ENCODE measurements at regions of chr20 and their contacts with region 1.

Region 1: GRCh38 chr20:52494244-52494643 is 302.7 kb upstream of the ZFP64 start:
- DNase-seq: peak; percentile 94
- H3K4me3 ChIP-seq: peak overlapping the region in 1 of 3 experiments; percentile 66
- H3K27ac ChIP-seq: peak overlapping the region; percentile 100
- H3K4me1 ChIP-seq: peaks cover 47% of the 10 kb centered on the region
- H3K27me3 ChIP-seq: no peaks in the 10 kb centered on the region
- CTCF ChIP-seq: no peak
- POLR2A ChIP-seq: peak; percentile 37

Region 2: DNA sequence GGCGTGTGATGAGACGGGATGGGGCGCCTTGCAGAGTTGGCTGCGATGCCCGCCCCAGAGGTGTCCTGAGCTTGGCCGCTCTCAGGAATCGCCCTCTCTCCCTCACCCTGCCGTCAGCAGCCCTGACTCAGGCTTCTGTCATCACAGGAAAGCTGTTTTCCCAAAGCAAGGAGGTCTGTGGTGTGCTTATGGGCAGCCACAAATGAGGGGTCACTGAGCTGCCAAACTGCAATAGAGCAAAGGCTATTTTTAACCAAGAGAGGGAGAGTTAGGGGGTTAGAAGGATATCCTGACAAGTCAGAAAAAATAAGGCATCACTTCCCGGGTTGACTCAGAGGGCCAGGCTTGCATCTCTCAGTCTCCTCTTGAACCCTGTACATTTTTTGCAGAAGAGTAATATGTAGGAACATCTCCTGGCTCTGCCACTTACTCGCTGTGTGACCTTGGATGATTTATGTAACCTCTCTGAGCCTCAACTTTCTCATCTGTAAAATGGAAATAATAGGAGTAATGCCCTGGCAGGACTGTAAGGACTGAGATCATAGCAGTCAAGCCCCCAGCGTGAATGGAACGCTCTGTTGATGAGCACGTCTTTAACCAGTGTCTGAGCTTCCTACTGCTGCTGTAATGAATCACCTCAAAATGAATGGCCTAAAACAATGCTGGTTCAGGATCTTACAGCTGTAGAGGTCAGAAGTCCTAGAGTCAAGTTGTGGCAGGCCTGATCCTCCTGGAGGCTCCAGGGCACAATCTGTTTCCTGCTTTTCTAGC is 1133.6 kb before region 1 on chr20:
- CTCF ChIA-PET with region 1: no interaction called
- POLR2A ChIA-PET with region 1: no interaction called
- dilution Hi-C with region 1: no loop called
- intact Hi-C with region 1: loop called (anchors 2 kb)
- DNase-seq: peak; percentile 98
- H3K4me3 ChIP-seq: no peak overlapping the region
- H3K27ac ChIP-seq: peak overlapping the region; percentile 85
- H3K4me1 ChIP-seq: peaks cover 33% of the 10 kb centered on the region
- H3K27me3 ChIP-seq: no peaks in the 10 kb centered on the region
- CTCF ChIP-seq: no peak
- POLR2A ChIP-seq: no peak

Region 3: GRCh38 chr20:52312132-52312729 is 182.0 kb before region 1 on chr20:
- CTCF ChIA-PET with region 1: interaction called, 12 read pairs
- POLR2A ChIA-PET with region 1: interaction called, 3 read pairs
- dilution Hi-C with region 1: no loop called
- intact Hi-C with region 1: loop called (anchors 2 kb)
- DNase-seq: peak; percentile 82
- H3K4me3 ChIP-seq: no peak overlapping the region
- H3K27ac ChIP-seq: no peak overlapping the region
- H3K4me1 ChIP-seq: no peaks in the 10 kb centered on the region
- H3K27me3 ChIP-seq: no peaks in the 10 kb centered on the region
- CTCF ChIP-seq: peak; percentile 61 to 63
- POLR2A ChIP-seq: no peak

Region 4: GRCh38 chr20:52425253-52425652 is 69.0 kb before region 1 on chr20:
- CTCF ChIA-PET with region 1: no interaction called
- POLR2A ChIA-PET with region 1: no interaction called
- dilution Hi-C with region 1: no loop called
- intact Hi-C with region 1: loop called (anchors 2 kb)
- DNase-seq: no peak
- H3K4me3 ChIP-seq: no peak overlapping the region
- H3K27ac ChIP-seq: no peak overlapping the region
- H3K4me1 ChIP-seq: no peaks in the 10 kb centered on the region
- H3K27me3 ChIP-seq: no peaks in the 10 kb centered on the region
- CTCF ChIP-seq: no peak
- POLR2A ChIP-seq: no peak

Region 5: DNA sequence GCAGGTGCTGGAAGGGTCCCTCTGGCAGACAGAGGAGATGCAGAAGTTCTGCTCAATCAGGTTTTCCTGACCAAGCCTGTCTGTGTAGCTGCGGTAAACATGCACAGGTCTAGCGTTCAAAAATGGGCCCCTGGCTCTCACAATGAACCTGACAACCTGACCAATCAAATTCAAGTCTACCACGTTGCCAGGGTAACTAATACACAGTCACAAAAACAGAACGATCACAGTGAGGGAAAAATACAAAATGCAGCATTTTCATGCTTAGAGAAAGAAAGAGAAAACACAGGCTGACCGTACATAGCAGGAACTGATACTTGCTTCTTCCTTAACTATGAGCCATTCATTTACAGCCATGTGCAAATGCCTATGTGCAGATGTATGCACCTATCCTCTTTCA is 124.9 kb after region 1 on chr20:
- CTCF ChIA-PET with region 1: no interaction called
- POLR2A ChIA-PET with region 1: no interaction called
- dilution Hi-C with region 1: no loop called
- intact Hi-C with region 1: no loop called
- DNase-seq: no peak
- H3K4me3 ChIP-seq: no peak overlapping the region
- H3K27ac ChIP-seq: no peak overlapping the region
- H3K4me1 ChIP-seq: peaks cover under 1% of the 10 kb centered on the region
- H3K27me3 ChIP-seq: no peaks in the 10 kb centered on the region
- CTCF ChIP-seq: no peak
- POLR2A ChIP-seq: no peak

Region 6: DNA sequence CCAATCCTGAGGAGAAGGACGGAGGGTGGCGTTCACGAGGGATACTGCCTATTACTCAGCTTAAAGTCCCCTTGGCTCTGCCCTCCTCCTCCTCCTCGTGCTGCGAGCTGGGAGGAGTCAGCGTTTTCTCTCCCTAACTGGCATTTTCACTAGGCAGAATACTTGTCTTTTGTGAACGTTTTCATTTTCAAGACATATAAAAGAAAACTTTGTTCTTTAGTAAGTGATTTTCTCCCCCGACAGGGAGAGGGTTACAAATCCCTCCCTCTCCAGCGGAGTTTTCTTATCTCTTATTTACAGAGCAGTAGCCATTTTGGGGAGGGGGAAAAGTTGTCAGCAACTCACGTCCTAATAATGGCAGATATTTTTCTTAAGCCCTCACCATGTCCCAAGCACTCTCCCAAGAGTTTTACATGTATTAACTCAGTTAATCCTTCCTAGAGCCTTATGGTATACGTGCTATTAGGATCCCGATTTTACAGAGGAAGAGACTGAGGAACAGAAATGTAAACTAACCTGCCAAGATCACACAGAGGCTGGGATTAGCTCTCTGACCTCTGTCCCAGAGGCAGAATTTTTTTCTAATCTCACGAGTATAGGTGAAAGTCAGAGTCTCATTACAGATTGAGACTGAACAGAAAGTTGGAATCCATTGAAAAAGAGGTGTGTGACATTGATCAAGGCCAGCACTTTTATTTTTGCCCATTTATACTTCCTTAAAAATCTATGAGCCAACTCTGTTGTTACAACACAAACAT is 1129.4 kb after region 1 on chr20:
- CTCF ChIA-PET with region 1: no interaction called
- POLR2A ChIA-PET with region 1: no interaction called
- dilution Hi-C with region 1: no loop called
- intact Hi-C with region 1: loop called (anchors 10 kb)
- DNase-seq: peak; percentile 85
- H3K4me3 ChIP-seq: peak overlapping the region in 1 of 3 experiments; percentile 43
- H3K27ac ChIP-seq: peak overlapping the region; percentile 92
- H3K4me1 ChIP-seq: peaks cover 26% of the 10 kb centered on the region
- H3K27me3 ChIP-seq: no peaks in the 10 kb centered on the region
- CTCF ChIP-seq: no peak
- POLR2A ChIP-seq: no peak

Region 7: GRCh38 chr20:53926428-53927028 is 1432.3 kb after region 1 on chr20:
- CTCF ChIA-PET with region 1: no interaction called
- POLR2A ChIA-PET with region 1: no interaction called
- dilution Hi-C with region 1: no loop called
- intact Hi-C with region 1: loop called (anchors 5 kb)
- DNase-seq: peak; percentile 96
- H3K4me3 ChIP-seq: no peak overlapping the region
- H3K27ac ChIP-seq: peak overlapping the region; percentile 77
- H3K4me1 ChIP-seq: peaks cover 13% of the 10 kb centered on the region
- H3K27me3 ChIP-seq: no peaks in the 10 kb centered on the region
- CTCF ChIP-seq: no peak
- POLR2A ChIP-seq: peak; percentile 38

Region 8: GRCh38 chr20:54219751-54220426 is 1725.6 kb after region 1 on chr20:
- CTCF ChIA-PET with region 1: no interaction called
- POLR2A ChIA-PET with region 1: no interaction called
- dilution Hi-C with region 1: no loop called
- intact Hi-C with region 1: loop called (anchors 10 kb)
- DNase-seq: peak; percentile 56
- H3K4me3 ChIP-seq: no peak overlapping the region
- H3K27ac ChIP-seq: no peak overlapping the region
- H3K4me1 ChIP-seq: peaks cover 11% of the 10 kb centered on the region
- H3K27me3 ChIP-seq: no peaks in the 10 kb centered on the region
- CTCF ChIP-seq: peak; percentile 30 to 33
- POLR2A ChIP-seq: no peak

Measured in endothelial cell of umbilical vein (primary cell).